Mammary epithelial cell (primary cell): ENCODE measurements at regions of chr5 and their contacts with region 1.

Region 1: DNA sequence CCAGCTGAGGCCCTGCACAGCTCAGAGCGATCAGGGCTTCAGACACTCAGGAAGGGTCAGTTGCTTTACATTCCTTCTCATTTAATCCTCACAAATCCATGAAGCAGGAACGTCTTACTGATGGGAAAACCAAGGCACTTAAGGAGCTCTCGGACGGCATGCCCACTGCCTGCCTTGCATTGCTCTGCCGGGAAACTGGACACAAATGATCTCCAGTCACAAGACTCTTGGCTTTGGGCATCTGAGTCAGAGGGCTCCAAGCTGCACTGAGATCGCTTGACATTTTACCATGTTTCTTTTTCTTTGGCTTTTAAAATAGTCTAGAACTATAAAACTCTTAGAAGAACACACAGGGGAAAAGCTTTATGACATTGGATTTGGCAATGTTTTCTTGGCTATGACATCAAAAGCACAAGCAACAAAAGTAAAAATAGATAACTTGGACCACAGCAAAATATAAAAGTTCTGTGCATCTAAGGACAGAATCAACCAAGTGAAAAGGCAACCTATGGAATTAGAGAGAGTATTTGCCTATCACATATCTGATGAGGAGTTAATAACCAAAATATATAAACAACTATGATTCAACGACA is 43.6 kb upstream of the HRH2 start:
- DNase-seq: no peak
- H3K4me3 ChIP-seq: no peak overlapping the region
- H3K27ac ChIP-seq: no peak overlapping the region
- H3K4me1 ChIP-seq: no peaks in the 10 kb centered on the region
- H3K27me3 ChIP-seq: no peaks in the 10 kb centered on the region
- CTCF ChIP-seq: no peak

Region 2: GRCh38 chr5:175556777-175557176 is 57.5 kb before region 1 on chr5:
- CTCF ChIA-PET with region 1: no interaction called
- dilution Hi-C with region 1: loop called (anchors 5 kb)
- in situ Hi-C with region 1: no loop called
- intact Hi-C with region 1: no loop called
- DNase-seq: no peak
- H3K4me3 ChIP-seq: no peak overlapping the region
- H3K27ac ChIP-seq: no peak overlapping the region
- H3K4me1 ChIP-seq: no peaks in the 10 kb centered on the region
- H3K27me3 ChIP-seq: peaks cover 2% of the 10 kb centered on the region
- CTCF ChIP-seq: no peak

Region 3: DNA sequence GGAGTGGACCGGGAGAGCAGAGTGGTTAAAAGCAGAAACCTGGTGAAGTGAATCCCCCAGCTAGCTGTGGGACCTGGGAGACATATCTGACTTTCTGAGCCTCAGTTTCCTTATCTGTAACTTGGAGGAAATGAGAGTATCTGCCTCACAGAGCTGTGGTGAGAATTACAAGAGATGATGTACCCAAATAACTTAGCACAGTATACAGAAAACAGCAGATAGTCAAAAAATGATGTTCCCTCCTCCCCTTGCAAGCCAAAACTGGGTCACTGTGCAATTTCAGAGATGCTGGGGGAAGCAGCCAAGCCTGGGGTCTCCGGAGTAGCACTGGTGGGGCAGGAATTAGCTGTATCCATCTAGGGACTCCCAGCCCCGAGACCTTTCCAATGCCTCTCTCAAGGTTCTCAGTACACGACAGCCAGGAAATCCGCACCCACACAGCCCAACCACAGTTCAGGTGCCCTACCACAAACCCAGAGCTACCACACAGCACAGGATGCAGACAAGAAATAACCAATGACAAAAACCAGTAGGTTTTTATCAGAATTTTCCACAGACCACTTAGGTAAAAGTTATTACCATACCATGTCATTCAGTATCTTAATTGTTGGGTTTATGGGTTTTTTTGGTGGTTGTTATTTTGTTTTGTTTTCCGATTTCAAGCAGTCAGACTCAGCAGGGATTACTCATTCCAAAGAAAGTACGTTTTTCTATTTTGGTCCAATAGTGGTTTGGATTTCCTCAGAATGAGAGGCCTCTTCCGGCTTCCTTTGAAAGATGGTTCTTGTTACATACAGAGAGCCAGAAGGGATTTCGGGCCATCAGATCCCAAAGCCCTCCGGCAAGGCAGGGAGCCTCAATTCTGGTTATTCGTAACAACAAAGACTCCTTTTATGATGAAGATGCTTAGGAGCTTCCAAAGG is 38.7 kb after region 1 on chr5:
- CTCF ChIA-PET with region 1: no interaction called
- dilution Hi-C with region 1: loop called (anchors 5 kb)
- in situ Hi-C with region 1: no loop called
- intact Hi-C with region 1: no loop called
- DNase-seq: no peak
- H3K4me3 ChIP-seq: no peak overlapping the region
- H3K27ac ChIP-seq: no peak overlapping the region
- H3K4me1 ChIP-seq: no peaks in the 10 kb centered on the region
- H3K27me3 ChIP-seq: peaks cover 12% of the 10 kb centered on the region
- CTCF ChIP-seq: no peak